ENCODE measurements at regions of chr1 and their contacts with region 1.

Region 1: GRCh38 chr1:223748773-223749733 is 36.7 kb downstream of the CAPN2 start:
- DNase-seq: peak; percentile 54 to 67
- ATAC-seq: peak; percentile 61 to 83
- H3K4me3 ChIP-seq: peak overlapping the region; percentile 18; the same call in 2 of the 3 replicates
- H3K27ac ChIP-seq: peak overlapping the region; percentile 80 to 81
- H3K4me1 ChIP-seq: peaks cover 36% of the 10 kb centered on the region
- CTCF ChIP-seq: peak; percentile 95
- EP300 ChIP-seq: no peak
- POLR2A ChIP-seq: no peak
- RAD21 ChIP-seq: peak; percentile 68 to 91

Region 2: DNA sequence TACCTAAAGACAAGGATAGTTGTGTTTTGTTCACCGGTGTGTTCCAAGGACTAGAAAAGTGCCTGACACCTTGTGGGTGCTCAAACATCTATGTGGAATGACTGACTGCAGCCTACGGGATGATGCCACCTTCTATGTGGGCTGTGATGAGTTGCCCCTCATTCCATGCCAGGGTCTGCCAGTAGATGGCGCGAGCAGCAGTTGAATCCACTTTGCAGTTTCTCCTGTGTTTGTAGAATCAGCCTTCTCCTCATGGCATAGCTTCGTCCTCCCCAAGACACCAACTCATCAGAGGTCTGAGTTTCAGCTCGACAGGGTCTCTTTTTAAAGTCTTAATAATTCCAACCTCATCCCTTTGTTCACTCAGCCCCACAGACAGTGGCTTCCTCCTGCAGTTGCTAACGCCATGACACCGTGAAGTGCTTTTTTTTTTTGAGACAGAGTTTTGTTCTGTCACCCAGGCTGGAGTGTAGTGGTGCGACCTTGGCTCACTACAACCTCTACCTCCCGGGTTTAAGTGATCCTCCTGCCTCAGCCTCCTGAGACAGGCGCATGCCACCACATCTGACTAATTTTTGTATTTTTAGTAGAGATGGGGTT is 217.2 kb before region 1 on chr1:
- CTCF ChIA-PET with region 1: no interaction called
- POLR2A ChIA-PET with region 1: no interaction called
- DNase-seq: peak; percentile 61 to 66
- ATAC-seq: peak; percentile 86 to 96
- H3K4me3 ChIP-seq: no peak overlapping the region
- H3K27ac ChIP-seq: no peak overlapping the region
- H3K4me1 ChIP-seq: no peaks in the 10 kb centered on the region
- CTCF ChIP-seq: peak; percentile 72
- EP300 ChIP-seq: no peak
- POLR2A ChIP-seq: no peak
- RAD21 ChIP-seq: peak; percentile 74 to 78

Region 3: GRCh38 chr1:223700942-223701637 is 48.0 kb before region 1 on chr1:
- CTCF ChIA-PET with region 1: interaction called, 122 read pairs
- POLR2A ChIA-PET with region 1: interaction called, 6 read pairs
- DNase-seq: peak; percentile 90 to 96
- ATAC-seq: peak; percentile 84 to 88
- H3K4me3 ChIP-seq: no peak overlapping the region; the same call in 2 of the 3 replicates
- H3K27ac ChIP-seq: peak overlapping the region; percentile 95 to 99
- H3K4me1 ChIP-seq: peaks cover 72% of the 10 kb centered on the region
- CTCF ChIP-seq: no peak
- EP300 ChIP-seq: peak; percentile 37 to 75; a peak in 3 of 5 replicates
- POLR2A ChIP-seq: peak; percentile 56
- RAD21 ChIP-seq: peak in 1 of 2 experiments; percentile 4; a peak in 3 of 5 replicates

Region 4: GRCh38 chr1:223726380-223727001 is 22.6 kb before region 1 on chr1:
- CTCF ChIA-PET with region 1: interaction called, 122 read pairs
- POLR2A ChIA-PET with region 1: interaction called, 3 read pairs
- DNase-seq: peak; percentile 87 to 93
- ATAC-seq: peak; percentile 87 to 89
- H3K4me3 ChIP-seq: no peak overlapping the region
- H3K27ac ChIP-seq: peak overlapping the region; percentile 80 to 99
- H3K4me1 ChIP-seq: peaks cover 90% of the 10 kb centered on the region
- CTCF ChIP-seq: no peak
- EP300 ChIP-seq: peak in 1 of 2 experiments; percentile 55; a peak in 1 of 5 replicates
- POLR2A ChIP-seq: no peak
- RAD21 ChIP-seq: no peak; a peak in 1 of 5 replicates

Region 5: DNA sequence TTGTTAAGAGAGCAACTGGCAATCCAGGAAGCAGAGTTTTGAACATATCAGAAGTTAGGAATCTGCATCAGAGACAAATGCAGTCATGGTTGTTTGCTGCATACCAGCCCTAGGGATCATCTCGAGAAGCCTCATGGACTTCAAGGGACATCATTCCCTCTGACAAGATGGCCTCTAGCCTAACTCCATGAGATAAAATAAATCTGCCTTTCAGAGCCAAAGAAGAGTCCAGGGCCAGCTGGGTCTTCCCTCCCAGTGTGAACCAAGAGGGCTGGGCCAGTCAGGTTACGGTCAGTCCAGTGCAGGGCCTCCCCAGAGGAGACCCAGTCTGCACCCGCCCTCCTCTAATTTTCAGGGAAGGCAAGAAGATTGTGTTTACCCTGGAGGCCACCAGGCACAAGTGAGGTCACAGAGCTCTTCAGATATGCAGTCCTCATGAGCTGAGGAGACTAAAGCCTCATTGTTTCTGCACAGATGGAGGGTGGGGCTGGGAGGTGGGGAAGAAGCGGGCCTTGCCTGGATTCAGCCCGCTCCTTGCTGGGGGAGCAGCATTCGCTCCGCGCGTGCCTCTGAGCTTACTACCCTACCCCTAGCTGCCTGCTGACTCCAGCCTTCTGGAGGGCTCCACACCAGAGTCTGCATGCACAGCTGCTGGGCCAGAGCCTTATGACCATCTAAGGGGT is 16.1 kb after region 1 on chr1:
- CTCF ChIA-PET with region 1: interaction called, 99 read pairs
- POLR2A ChIA-PET with region 1: no interaction called
- DNase-seq: no peak
- ATAC-seq: peak; percentile 45 to 53
- H3K4me3 ChIP-seq: no peak overlapping the region
- H3K27ac ChIP-seq: no peak overlapping the region
- H3K4me1 ChIP-seq: peaks cover 10% of the 10 kb centered on the region; the same call in 2 of the 3 replicates
- CTCF ChIP-seq: no peak
- EP300 ChIP-seq: no peak
- POLR2A ChIP-seq: no peak
- RAD21 ChIP-seq: no peak

Measured in A549 (cell line).